ENCODE measurements at regions of chr20 and their contacts with region 1.

Region 1: DNA sequence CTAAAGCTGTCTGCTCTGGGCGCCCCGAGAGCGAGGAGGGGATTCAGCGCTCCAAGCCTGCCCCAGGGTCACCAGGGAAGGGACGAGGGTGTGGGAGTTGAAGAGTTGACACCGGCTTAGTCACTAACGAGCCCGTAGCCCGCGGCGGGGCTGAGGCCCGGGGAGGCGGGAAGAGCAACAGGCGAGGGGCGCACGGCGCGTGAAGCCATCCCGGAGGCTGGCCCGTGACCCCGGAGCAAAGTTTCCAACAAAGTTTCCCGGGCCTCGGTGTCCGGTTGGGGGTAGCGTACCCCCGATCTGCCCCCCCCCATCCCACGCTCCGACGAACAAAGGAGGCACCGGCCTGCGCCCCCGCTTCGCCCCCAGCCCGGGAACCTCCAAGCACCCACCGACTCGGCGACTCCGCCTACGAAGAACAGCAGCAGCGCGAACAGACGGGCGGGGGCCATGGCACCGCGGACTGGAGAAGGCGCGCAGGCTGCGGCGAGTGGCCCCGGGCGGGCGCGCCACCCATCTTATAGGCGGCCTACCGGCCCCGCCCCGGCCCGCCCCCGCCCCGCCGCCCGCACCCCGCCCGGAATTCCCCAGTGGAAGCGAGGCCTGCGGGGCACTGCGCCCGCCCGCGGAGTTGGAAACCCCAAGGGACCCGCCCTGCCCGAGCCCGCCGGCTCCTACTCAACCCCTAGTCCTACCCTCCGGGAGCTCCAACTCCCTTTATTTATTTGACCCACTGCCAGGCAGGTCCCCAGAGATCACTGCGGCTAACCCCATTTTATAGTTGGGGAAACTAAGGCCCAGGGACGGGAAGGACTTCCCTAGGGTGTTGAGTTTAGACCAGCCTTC is at the start of gene SDC4:
- DNase-seq: peak; percentile 73
- H3K4me3 Mint-ChIP-seq: peak within 1 kb of the TSS; percentile 89
- H3K27ac Mint-ChIP-seq: peak within 1 kb of the TSS; percentile 93
- H3K4me1 Mint-ChIP-seq: peaks cover 20% of the 10 kb centered on the region
- H3K27me3 Mint-ChIP-seq: no peaks in the 10 kb centered on the region
- CTCF ChIP-seq: no peak
- total RNA-seq, gene SDC4: 180 and 209 TPM in 2 replicates

Region 2: GRCh38 chr20:45415774-45416637 is 67.8 kb after region 1 on chr20 and contains the start of gene PIGT:
- CTCF ChIA-PET with region 1: no interaction called
- POLR2A ChIA-PET with region 1: interaction called, 23 read pairs
- intact Hi-C with region 1: loop called (anchors 5 kb)
- DNase-seq: peak; percentile 81
- H3K4me3 Mint-ChIP-seq: peak within 1 kb of the TSS; percentile 90
- H3K27ac Mint-ChIP-seq: peak within 1 kb of the TSS; percentile 93
- H3K4me1 Mint-ChIP-seq: peaks cover 24% of the 10 kb centered on the region
- H3K27me3 Mint-ChIP-seq: no peaks in the 10 kb centered on the region
- CTCF ChIP-seq: no peak
- total RNA-seq, gene PIGT: 79.4 and 84.3 TPM in 2 replicates